Aorta (tissue), 5 donors: ENCODE measurements at regions of chr10 and their contacts with region 1.

Region 1: DNA sequence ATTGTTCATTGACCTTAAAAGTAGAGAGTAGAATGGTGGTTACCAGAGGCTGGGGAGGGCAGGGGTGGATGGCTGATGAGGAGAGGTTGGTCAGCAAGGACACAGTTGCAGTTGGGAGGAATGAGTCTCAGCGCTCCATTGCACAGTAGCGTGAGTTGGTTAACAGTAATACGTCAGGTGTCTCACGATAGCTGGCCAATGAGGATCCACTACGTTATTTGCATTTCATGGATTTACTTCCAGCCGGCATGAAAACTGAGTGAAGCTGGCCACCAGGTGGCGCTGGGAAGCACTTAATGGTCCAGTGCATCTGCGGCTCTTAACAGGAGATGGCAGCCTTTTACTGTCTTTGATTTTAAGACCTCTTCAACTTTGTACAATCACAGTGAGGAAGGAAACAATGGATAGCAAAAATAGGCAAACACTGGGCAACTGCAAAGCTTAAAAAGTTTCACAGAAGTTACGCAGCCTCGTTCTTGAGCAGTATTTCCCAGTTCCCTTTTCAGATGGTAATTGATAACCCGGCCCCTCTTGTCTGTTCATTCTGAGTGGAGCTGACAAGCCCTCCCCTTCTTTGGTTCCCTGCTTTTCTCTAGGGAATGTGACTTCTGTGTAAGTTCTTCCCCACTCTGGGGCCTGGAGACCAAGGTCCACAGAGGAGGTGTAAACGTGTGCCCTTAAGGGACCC is 23.7 kb downstream of the AKR1E2 start:
- DNase-seq: peak; percentile 93 to 98
- ATAC-seq: peak; percentile 92
- H3K4me3 ChIP-seq: no peak overlapping the region
- H3K27ac ChIP-seq: peak overlapping the region; percentile 20 to 52
- H3K4me1 ChIP-seq: no peaks in the 10 kb centered on the region
- H3K27me3 ChIP-seq: no peaks in the 10 kb centered on the region

Region 2: DNA sequence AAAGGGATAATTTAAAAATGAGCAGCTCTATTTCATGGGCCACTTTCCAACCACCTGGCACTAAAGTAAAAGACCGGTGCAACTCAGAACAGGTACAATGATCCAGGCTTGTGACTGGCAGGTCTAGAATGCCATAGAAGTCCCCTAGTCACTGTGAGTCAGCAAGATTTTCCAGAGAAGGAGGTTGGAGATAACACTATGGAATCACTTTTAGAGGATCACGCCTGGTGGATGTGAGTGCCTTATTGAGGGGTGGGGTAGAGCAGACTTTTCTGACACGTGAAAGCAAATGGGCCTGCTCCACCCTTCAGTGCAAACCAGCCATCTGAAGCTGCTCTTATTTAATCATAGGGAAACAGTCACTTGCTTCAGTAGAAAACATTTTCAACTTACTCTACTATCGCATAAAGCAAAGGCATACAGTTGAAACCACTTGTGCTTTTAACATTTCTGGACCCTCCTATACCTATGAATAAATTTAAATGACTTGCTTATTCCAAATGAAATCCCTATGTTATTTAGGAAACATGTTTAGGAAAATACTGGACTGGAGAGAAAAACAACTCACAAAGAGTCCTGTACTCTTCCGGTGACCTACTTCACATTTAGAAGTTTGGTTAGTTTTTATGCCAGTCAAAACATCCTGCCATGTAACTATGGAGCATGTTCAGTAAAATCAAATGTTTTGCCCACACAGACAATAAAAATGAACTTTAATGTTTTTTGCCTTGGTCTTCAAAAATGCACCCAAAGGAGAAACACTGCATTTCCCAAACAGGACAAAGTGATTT is 92.0 kb after region 1 on chr10:
- intact Hi-C with region 1: loop called (anchors 5 kb)
- DNase-seq: no peak
- ATAC-seq: peak; percentile 49
- H3K4me3 ChIP-seq: no peak overlapping the region
- H3K27ac ChIP-seq: peak overlapping the region; percentile 82 to 94
- H3K4me1 ChIP-seq: peaks cover 4 to 5% of the 10 kb centered on the region in 2 donors
- H3K27me3 ChIP-seq: no peaks in the 10 kb centered on the region

Region 3: DNA sequence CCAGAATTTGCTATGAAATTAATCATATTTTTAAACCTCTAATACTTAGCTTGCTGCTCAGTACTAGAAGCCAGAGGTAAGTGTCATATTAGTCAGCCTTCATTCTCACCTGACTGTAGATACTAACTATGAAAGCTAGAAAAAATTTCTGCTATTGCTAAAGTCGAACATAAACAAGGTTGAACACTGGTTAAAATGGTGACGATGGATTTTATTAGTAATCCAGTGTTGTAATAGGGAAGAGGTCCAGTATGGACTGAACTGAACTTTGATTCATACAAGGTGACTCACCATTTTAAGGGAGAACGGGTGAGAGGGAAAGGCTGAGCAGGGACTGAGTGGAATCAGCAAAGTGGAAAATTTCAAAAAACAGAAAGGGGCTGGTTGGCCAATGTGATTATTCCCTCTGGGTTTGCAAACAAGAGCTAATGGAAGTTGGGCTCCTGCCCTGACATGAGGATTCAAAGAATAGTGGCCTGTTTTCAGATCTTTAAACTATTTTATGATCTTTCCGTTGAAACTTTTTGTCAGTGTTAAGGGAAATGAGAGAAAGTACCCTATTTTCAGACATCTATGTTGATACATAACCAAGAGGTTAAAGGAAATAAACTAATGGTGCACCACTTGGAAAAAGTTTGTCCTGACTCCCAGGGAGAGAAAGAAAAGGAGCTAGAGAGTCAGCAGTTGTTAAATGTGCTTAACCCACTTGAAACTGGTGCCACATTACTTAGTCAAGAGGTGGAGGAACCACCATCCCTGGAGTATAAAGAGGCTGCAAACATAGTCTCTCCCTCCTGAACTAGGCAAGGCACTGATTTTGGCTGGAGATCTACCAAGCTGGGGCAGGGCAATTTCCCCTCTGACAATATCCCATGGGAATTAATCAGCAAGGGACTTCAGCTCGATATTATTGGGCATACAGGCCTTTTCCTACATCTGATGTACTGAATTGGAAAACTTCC is 98.2 kb after region 1 on chr10:
- intact Hi-C with region 1: loop called in 1 of 2 experiments (anchors 5 kb)
- DNase-seq: peak in 1 of 2 donors; percentile 58
- ATAC-seq: peak; percentile 93
- H3K4me3 ChIP-seq: no peak overlapping the region
- H3K27ac ChIP-seq: peak overlapping the region; percentile 96 to 98
- H3K4me1 ChIP-seq: peaks cover 2 to 19% of the 10 kb centered on the region in 2 donors
- H3K27me3 ChIP-seq: no peaks in the 10 kb centered on the region

Region 4: GRCh38 chr10:5094265-5095205 is 244.8 kb after region 1 on chr10 and contains the start of gene AKR1C3:
- intact Hi-C with region 1: loop called (anchors 2 kb)
- DNase-seq: no peak
- ATAC-seq: peak; percentile 84
- H3K4me3 ChIP-seq: peak within 1 kb of the TSS; percentile 96 to 98
- H3K27ac ChIP-seq: peak within 1 kb of the TSS; percentile 84 to 87
- H3K4me1 ChIP-seq: no peaks in the 10 kb centered on the region
- H3K27me3 ChIP-seq: no peaks in the 10 kb centered on the region
- total RNA-seq, gene AKR1C3: 36.2 to 98.8 TPM

Region 5: DNA sequence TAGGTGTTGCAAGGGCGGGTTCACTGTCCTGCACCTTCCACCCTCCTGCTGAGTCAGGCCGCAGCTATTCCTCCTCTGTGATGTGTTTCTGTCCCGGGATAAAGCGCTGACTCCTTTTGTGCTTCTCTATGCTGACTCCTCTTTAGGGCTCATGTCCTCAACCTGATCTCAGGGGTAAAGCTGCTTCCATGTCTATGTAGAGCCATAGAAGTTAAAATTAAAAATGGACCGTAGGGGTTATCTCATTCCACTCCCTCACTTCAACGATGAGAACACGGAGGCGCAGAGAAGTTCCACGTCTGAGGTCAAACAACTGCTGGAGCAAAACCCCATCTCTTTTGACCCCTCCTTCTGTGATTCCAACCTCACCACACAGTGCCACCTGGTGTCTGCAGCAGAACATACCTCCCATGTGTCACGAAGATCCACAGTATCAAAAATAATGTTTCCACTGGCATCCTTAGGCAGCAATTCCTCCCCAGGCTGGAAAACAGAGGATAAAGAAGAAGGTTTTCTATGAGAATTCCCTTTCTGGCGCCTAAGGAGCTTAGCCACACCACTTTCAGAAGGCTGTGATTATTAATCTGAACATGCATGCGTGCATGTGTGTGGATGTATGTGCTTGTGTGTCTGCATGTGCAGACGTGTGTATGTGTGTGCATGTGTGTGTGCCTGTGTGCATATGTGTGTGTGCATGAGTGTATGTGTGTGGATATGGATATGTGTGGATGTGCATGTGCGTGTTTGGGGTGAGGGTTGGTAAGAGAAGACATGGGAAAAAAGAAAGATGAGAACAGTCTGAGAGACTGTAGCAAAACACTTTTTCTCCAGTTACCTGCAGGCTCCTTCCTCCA is 433.8 kb after region 1 on chr10:
- intact Hi-C with region 1: loop called (anchors 2 kb)
- DNase-seq: peak; percentile 79 to 80
- ATAC-seq: peak; percentile 84
- H3K4me3 ChIP-seq: no peak overlapping the region
- H3K27ac ChIP-seq: no peak overlapping the region
- H3K4me1 ChIP-seq: peaks cover 0 to 4% of the 10 kb centered on the region in 2 donors
- H3K27me3 ChIP-seq: no peaks in the 10 kb centered on the region

Region 6: DNA sequence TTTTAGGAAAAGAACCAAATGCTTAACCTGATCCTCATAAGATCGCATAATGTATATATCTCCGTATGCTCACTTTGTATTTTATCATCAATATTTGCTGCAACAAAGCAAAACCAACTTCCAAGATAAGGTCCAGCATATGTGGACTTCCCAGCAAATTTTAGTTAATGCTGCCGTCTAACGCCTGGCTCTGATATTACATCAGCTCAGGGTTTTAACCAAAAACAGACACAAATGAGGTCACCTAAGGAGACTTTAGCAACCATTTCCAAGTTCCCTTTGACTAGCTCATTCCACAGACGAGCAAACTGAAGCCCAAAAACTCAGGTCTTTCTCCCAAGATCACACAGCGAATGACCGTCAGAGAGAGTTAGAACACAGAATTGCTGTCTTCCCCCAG is 455.7 kb after region 1 on chr10:
- intact Hi-C with region 1: loop called in 1 of 2 experiments (anchors 5 kb)
- DNase-seq: no peak
- ATAC-seq: no peak
- H3K4me3 ChIP-seq: no peak overlapping the region
- H3K27ac ChIP-seq: no peak overlapping the region
- H3K4me1 ChIP-seq: no peaks in the 10 kb centered on the region
- H3K27me3 ChIP-seq: no peaks in the 10 kb centered on the region

Region 7: GRCh38 chr10:5385224-5385623 is 535.5 kb after region 1 on chr10:
- intact Hi-C with region 1: loop called (anchors 10 kb)
- DNase-seq: no peak
- ATAC-seq: no peak
- H3K4me3 ChIP-seq: no peak overlapping the region
- H3K27ac ChIP-seq: no peak overlapping the region
- H3K4me1 ChIP-seq: no peaks in the 10 kb centered on the region
- H3K27me3 ChIP-seq: no peaks in the 10 kb centered on the region